ENCODE measurements at regions of chr17 and their contacts with region 1.

Region 1: GRCh38 chr17:75154195-75155106 is at the start of gene JPT1:
- DNase-seq: peak; percentile 91
- ATAC-seq: peak; percentile 98
- H3K4me3 Mint-ChIP-seq: peak within 1 kb of the TSS; percentile 97
- H3K27ac Mint-ChIP-seq: peak within 1 kb of the TSS; percentile 88
- H3K4me1 Mint-ChIP-seq: peaks cover 34% of the 10 kb centered on the region
- H3K27me3 Mint-ChIP-seq: no peaks in the 10 kb centered on the region
- total RNA-seq, gene JPT1: 194 to 213 TPM

Region 2: GRCh38 chr17:75131280-75132017 is 23.0 kb before region 1 on chr17 and contains the start of gene NT5C:
- POLR2A ChIA-PET with region 1: interaction called, 20 read pairs
- DNase-seq: peak; percentile 86
- ATAC-seq: peak; percentile 80
- H3K4me3 Mint-ChIP-seq: peak within 1 kb of the TSS; percentile 89
- H3K27ac Mint-ChIP-seq: peak within 1 kb of the TSS; percentile 85
- H3K4me1 Mint-ChIP-seq: peaks cover 10% of the 10 kb centered on the region
- H3K27me3 Mint-ChIP-seq: no peaks in the 10 kb centered on the region
- total RNA-seq, gene NT5C: 69.9 to 70.8 TPM

Region 3: DNA sequence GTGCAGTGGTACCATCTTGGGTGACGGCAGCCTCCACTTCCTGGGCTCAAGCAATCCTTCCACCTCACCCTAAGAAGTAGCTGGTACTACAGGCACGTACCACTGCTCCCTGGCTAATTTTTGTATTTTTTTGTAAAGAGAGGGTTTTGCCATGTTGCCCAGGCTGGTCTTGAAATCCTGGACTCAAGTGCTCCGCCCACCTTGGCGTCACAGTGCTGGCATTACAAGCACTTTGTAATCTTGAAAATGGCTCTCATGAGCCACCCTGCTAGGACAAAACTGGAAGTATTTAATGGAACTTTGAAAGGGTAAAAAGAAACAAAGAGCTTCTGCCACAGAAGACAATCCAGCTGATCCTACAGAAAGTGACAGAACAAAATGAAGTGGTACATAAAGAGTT is 19.1 kb after region 1 on chr17:
- POLR2A ChIA-PET with region 1: interaction called, 13 read pairs
- DNase-seq: no peak
- ATAC-seq: no peak
- H3K4me3 Mint-ChIP-seq: no peak overlapping the region
- H3K27ac Mint-ChIP-seq: peak overlapping the region; percentile 48
- H3K4me1 Mint-ChIP-seq: peaks cover 19% of the 10 kb centered on the region
- H3K27me3 Mint-ChIP-seq: no peaks in the 10 kb centered on the region

Region 4: GRCh38 chr17:75182569-75183450 is 28.4 kb after region 1 on chr17 and contains the start of gene SUMO2:
- POLR2A ChIA-PET with region 1: interaction called, 18 read pairs
- DNase-seq: peak; percentile 99
- ATAC-seq: peak; percentile 80
- H3K4me3 Mint-ChIP-seq: peak within 1 kb of the TSS; percentile 92
- H3K27ac Mint-ChIP-seq: peak within 1 kb of the TSS; percentile 95
- H3K4me1 Mint-ChIP-seq: peaks cover 26% of the 10 kb centered on the region
- H3K27me3 Mint-ChIP-seq: no peaks in the 10 kb centered on the region
- total RNA-seq, gene SUMO2: 470 to 500 TPM

Region 5: GRCh38 chr17:75205037-75205792 is 50.8 kb after region 1 on chr17 and contains the start of gene NUP85:
- POLR2A ChIA-PET with region 1: interaction called, 10 read pairs
- DNase-seq: peak; percentile 95
- ATAC-seq: peak; percentile 87
- H3K4me3 Mint-ChIP-seq: peak within 1 kb of the TSS; percentile 92
- H3K27ac Mint-ChIP-seq: peak within 1 kb of the TSS; percentile 98
- H3K4me1 Mint-ChIP-seq: peaks cover 18% of the 10 kb centered on the region
- H3K27me3 Mint-ChIP-seq: no peaks in the 10 kb centered on the region
- total RNA-seq, gene NUP85: 154 to 167 TPM